Head of caudate nucleus (tissue), 42 donors: ENCODE measurements at regions of chr4 and their contacts with region 1.

Region 1: GRCh38 chr4:98143001-98143899 is at the start of gene STPG2:
- DNase-seq: peak; percentile 81 to 98 (median 95)

Region 2: GRCh38 chr4:98260579-98261290 is 117.5 kb after region 1 on chr4:
- intact Hi-C with region 1: loop called (anchors 5 kb)
- DNase-seq: peak; percentile 69 to 98 (median 94)